ENCODE measurements at regions of chr1 and their contacts with region 1.

Region 1: GRCh38 chr1:204989266-204990058 is 53.5 kb upstream of the CNTN2 start:
- DNase-seq: peak; percentile 68 to 91 (median 76)
- H3K4me3 ChIP-seq: no peak overlapping the region
- H3K27ac ChIP-seq: no peak overlapping the region
- H3K4me1 ChIP-seq: no peaks in the 10 kb centered on the region
- H3K27me3 ChIP-seq: no peaks in the 10 kb centered on the region
- CTCF ChIP-seq: peak; percentile 87 to 98 (median 96)
- POLR2A ChIP-seq: no peak

Region 2: DNA sequence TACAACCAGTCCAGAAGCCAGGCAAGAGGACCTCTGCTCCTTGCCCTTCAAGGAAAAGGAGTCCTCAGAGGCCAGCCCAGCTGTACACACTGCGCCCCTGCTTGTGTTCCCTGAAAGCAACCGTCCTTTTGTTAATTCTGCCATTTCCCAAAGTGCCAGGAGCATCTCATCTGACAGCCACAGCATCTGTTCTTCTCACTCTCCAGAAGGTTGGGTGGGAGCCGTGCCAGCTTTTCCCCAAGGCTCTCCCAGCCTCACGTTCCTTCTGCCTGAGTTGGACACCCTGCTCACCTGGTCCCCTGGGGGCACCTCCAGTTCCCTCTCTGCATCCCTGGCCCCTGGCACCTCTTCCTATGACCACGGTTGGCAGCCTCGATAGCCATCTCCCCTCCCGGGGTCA is 43.0 kb after region 1 on chr1:
- intact Hi-C with region 1: no loop called
- DNase-seq: no peak
- H3K4me3 ChIP-seq: no peak overlapping the region
- H3K27ac ChIP-seq: no peak overlapping the region
- H3K4me1 ChIP-seq: no peaks in the 10 kb centered on the region
- H3K27me3 ChIP-seq: no peaks in the 10 kb centered on the region
- CTCF ChIP-seq: no peak
- POLR2A ChIP-seq: no peak

Region 3: DNA sequence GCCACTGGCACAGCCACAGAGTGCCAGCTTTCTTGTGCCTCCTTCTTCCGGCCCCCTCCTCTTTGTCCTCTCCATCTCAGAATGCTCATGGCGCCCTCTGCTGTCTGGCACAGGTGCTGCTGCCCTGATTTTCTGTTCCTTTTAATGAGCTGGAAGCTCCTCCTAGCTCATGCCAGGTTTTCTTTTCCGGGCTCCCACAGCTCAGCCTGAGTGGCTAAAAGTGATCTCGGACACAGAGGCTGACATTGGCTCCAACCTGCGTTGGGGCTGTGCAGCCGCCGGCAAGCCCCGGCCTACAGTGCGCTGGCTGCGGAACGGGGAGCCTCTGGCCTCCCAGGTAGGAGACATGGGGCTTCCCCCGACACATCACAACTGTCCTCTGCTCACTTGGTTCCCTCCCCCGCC is 72.2 kb after region 1 on chr1:
- intact Hi-C with region 1: loop called (anchors 2 to 5 kb)
- DNase-seq: peak; percentile 72 to 93 (median 78)
- H3K4me3 ChIP-seq: no peak overlapping the region
- H3K27ac ChIP-seq: no peak overlapping the region
- H3K4me1 ChIP-seq: no peaks in the 10 kb centered on the region
- H3K27me3 ChIP-seq: no peaks in the 10 kb centered on the region
- CTCF ChIP-seq: peak; percentile 75 to 95 (median 90)
- POLR2A ChIP-seq: no peak

Region 4: GRCh38 chr1:205108464-205108863 is 119.0 kb after region 1 on chr1:
- intact Hi-C with region 1: no loop called
- DNase-seq: no peak
- H3K4me3 ChIP-seq: no peak overlapping the region
- H3K27ac ChIP-seq: no peak overlapping the region
- H3K4me1 ChIP-seq: peaks cover 0 to 1% of the 10 kb centered on the region in 2 donors
- H3K27me3 ChIP-seq: no peaks in the 10 kb centered on the region
- CTCF ChIP-seq: no peak
- POLR2A ChIP-seq: no peak